Ascending aorta (tissue), 2 donors: ENCODE measurements at regions of chr5 and their contacts with region 1.

Region 1: GRCh38 chr5:88940713-88941112 is 57.7 kb upstream of the MEF2C start:
- DNase-seq: no peak
- H3K4me3 ChIP-seq: no peak overlapping the region
- H3K27ac ChIP-seq: no peak overlapping the region
- H3K4me1 ChIP-seq: peaks cover 0 to 14% of the 10 kb centered on the region in 2 donors
- H3K27me3 ChIP-seq: no peaks in the 10 kb centered on the region
- CTCF ChIP-seq: no peak

Region 2: DNA sequence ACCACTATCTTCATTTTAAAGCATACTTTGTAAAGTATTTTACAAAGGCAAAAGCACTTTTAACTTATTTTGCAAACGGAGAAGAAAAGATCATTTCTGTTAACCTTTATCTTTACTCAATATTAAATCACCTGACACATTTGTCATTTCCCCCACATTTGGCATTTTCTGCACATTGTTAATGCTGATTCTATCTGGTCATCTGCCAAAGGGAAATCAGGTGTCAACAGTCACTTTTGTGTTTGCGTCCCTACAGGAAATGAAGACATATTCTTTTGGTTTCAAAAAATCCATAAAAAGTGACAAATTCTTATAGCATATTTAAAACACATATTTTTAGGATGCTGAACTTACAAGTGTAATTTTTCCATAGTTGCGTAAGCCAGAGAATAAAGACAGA is 480.7 kb before region 1 on chr5:
- intact Hi-C with region 1: no loop called
- DNase-seq: no peak
- H3K4me3 ChIP-seq: no peak overlapping the region
- H3K27ac ChIP-seq: no peak overlapping the region
- H3K4me1 ChIP-seq: no peaks in the 10 kb centered on the region
- H3K27me3 ChIP-seq: no peaks in the 10 kb centered on the region
- CTCF ChIP-seq: no peak

Region 3: GRCh38 chr5:88889189-88890069 is 51.3 kb before region 1 on chr5:
- intact Hi-C with region 1: loop called (anchors 5 kb)
- DNase-seq: peak; percentile 35 to 85
- H3K4me3 ChIP-seq: peak overlapping the region; percentile 72 to 83
- H3K27ac ChIP-seq: peak overlapping the region; percentile 90 to 95
- H3K4me1 ChIP-seq: peaks cover 0 to 4% of the 10 kb centered on the region in 2 donors
- H3K27me3 ChIP-seq: no peaks in the 10 kb centered on the region
- CTCF ChIP-seq: no peak

Region 4: GRCh38 chr5:89020926-89021610 is 80.4 kb after region 1 on chr5:
- intact Hi-C with region 1: no loop called
- DNase-seq: no peak
- H3K4me3 ChIP-seq: no peak overlapping the region
- H3K27ac ChIP-seq: no peak overlapping the region
- H3K4me1 ChIP-seq: no peaks in the 10 kb centered on the region
- H3K27me3 ChIP-seq: no peaks in the 10 kb centered on the region
- CTCF ChIP-seq: no peak

Region 5: DNA sequence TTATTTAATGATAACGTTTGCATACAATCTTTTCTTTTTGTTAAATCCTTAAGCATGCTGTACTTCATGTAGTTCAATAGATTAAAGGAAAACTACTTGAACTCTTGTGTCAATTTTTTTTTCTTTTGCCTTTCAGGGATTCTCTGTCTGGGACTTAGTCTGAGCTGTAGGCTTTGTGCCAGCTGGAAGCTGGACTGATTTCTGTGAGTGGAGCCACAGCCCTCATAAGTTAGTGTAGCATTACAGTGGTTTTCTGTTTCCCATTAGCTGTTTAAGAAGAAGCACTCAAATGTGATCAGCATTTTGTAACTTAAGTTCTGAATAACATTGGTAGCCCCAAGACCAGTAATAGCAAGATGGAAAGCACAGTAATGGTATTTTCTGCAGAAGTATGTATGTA is 272.9 kb after region 1 on chr5:
- intact Hi-C with region 1: loop called (anchors 5 kb)
- DNase-seq: no peak
- H3K4me3 ChIP-seq: no peak overlapping the region
- H3K27ac ChIP-seq: no peak overlapping the region
- H3K4me1 ChIP-seq: no peaks in the 10 kb centered on the region
- H3K27me3 ChIP-seq: no peaks in the 10 kb centered on the region
- CTCF ChIP-seq: no peak

Region 6: DNA sequence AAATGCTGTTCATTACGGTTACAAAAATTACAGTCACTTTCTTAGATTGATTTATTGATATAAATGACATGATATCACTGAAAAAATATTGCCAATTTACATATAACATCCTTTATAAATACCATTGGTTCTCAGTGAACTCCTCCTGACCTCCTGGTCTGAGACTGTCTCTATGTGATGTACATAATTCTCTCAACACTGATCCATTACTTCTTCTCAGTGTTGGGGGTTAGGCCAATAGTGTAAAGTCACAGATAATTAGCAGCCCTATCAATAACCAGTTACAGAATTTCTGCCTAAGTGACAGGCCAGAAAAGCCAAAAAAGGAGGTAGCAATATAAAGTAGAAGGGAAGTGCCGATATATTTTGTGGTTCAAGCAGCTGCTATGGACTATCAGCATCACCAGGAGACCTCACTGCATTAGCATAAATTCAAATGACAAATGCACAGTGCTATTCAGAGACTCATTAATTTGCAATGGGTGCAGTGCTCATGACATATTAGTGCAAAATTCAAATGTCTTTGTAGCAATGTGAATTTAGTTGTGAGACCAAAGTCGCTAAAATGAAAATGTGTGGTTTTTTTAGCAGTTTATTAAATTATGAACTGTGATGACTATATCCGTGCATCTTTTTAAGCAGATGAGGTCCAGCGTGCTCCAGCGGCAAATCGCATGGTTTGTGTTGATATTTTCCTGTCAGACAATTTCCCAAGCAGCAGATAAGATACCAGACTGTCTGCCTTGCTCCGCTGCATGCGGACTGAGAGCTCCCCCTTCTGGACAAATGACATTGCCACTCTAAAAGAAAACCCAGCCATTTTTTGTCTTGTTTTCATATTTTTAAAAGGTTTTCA is 1324.2 kb after region 1 on chr5:
- intact Hi-C with region 1: loop called (anchors 5 kb)
- DNase-seq: peak in 1 of 2 donors; percentile 71
- H3K4me3 ChIP-seq: peak overlapping the region in 1 of 2 donors; percentile 29
- H3K27ac ChIP-seq: no peak overlapping the region
- H3K4me1 ChIP-seq: peaks cover 0 to 12% of the 10 kb centered on the region in 2 donors
- H3K27me3 ChIP-seq: no peaks in the 10 kb centered on the region
- CTCF ChIP-seq: peak; percentile 75 to 94 (median 92)